A673 (cell line): ENCODE measurements at regions of chr19 and their contacts with region 1.

Region 1: DNA sequence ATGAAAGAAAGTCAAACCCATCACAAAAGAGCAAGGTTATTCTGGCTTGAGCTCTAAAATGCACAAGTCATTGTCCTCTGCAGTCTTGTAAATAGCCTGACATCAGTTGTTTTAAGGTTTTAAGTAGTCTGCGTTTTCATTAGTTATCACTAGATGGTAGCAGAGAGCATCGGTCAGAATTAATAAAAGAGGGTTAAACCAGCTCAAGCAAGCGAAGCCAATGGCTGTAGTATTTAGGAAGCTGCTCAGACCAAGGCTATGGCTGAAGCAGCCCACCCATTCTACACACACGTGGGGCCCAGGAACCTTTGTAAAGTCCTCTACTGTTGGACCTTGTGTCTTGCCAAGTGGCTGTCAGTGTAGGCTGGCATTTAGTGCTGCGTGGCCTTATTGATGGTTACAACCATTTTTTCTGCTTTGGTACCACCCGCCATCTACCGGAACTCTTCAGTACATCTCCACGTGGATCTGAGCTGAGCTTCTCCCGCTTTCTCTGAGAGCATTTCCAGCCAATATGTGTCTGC is 13.3 kb upstream of the ZNF57 start:
- DNase-seq: peak; percentile 82
- H3K4me3 ChIP-seq: no peak overlapping the region
- H3K27ac ChIP-seq: no peak overlapping the region
- H3K4me1 ChIP-seq: peaks cover 6% of the 10 kb centered on the region
- H3K27me3 ChIP-seq: no peaks in the 10 kb centered on the region
- CTCF ChIP-seq: peak; percentile 79

Region 2: DNA sequence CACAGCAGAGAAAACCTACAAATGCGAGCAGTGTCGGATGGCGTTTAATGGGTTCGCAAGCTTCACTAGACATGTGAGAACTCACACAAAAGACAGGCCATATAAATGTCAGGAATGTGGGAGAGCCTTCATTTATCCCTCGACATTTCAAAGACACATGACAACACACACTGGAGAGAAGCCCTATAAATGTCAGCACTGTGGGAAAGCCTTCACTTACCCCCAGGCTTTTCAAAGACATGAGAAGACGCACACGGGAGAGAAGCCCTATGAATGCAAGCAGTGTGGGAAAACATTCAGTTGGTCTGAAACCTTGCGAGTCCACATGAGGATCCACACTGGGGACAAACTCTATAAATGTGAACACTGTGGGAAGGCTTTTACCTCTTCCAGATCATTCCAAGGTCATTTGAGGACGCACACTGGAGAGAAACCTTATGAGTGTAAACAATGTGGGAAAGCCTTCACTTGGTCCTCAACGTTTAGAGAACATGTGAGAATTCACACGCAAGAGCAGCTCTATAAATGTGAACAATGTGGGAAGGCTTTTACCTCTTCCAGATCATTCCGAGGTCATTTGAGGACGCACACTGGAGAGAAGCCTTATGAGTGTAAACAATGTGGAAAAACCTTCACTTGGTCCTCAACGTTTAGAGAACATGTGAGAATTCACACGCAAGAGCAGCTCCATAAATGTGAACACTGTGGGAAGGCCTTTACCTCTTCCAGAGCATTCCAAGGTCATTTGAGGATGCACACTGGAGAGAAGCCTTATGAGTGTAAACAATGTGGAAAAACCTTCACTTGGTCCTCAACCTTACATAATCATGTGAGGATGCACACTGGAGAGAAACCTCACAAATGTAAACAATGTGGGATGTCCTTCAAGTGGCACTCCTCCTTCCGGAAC is 30.1 kb after region 1 on chr19:
- CTCF ChIA-PET with region 1: interaction called, 15 read pairs
- POLR2A ChIA-PET with region 1: no interaction called
- intact Hi-C with region 1: no loop called
- DNase-seq: no peak
- H3K4me3 ChIP-seq: no peak overlapping the region
- H3K27ac ChIP-seq: no peak overlapping the region
- H3K4me1 ChIP-seq: no peaks in the 10 kb centered on the region
- H3K27me3 ChIP-seq: no peaks in the 10 kb centered on the region
- CTCF ChIP-seq: no peak

Region 3: DNA sequence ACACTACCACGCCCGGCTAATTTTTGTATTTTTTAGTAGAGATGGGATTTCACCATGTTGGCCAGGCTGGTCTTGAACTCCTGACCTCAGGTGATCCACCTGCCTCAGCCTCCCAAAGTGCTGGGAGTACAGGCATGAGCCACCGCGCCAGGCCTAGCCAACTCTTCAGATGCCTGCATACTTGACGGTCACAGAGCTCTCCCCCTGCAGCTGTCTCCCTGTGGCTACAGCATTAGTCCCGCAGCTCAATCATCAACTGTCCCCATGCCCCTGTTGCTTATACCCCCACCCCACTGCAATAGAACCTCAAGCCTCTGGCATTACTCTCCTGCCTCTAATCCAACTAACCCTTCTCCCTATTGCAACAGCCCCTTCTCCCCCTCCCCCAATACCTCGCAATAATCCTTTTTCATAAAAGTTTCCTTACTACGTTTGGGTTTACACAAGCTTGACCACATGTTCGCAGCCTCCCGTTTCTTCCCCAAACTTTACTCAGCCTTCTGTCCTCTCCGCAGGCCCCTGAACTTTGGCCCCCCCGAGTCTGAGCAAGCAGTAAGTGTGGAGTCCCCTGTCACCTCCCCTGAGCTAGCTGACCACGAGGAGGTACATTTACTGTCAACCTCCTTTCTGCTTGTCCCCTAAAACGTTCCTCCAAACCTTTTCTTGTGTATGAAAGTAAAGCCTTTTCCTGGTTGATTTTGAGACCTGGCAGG is 55.6 kb after region 1 on chr19:
- CTCF ChIA-PET with region 1: no interaction called
- POLR2A ChIA-PET with region 1: no interaction called
- intact Hi-C with region 1: no loop called
- DNase-seq: no peak
- H3K4me3 ChIP-seq: no peak overlapping the region
- H3K27ac ChIP-seq: no peak overlapping the region
- H3K4me1 ChIP-seq: no peaks in the 10 kb centered on the region
- H3K27me3 ChIP-seq: no peaks in the 10 kb centered on the region
- CTCF ChIP-seq: no peak

Region 4: DNA sequence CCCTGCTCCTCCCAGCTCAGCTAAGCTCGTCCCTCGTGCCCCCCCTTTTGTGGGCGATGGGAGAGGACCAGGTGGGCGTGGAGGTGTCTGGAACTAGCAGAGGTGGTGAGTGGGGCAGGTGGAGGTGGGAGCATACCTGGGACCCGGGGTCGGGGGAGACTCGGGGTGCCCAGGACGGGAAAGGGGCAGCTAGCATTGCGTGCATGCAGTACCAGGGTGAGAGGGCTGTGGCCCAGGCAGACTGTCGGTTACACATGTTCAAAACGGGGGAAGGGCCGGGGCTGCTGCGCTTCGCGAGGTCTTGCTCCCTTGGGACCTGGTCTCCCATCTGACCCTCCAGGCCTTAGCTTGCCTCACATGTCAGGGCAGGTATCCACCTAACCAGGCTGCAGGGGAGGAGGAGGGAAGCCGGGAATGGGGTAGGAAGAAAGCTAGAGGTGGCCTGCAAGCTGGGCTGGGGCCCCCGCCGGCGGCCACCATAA is 165.8 kb after region 1 on chr19:
- CTCF ChIA-PET with region 1: no interaction called
- POLR2A ChIA-PET with region 1: interaction called, 14 read pairs
- intact Hi-C with region 1: no loop called
- DNase-seq: no peak
- H3K4me3 ChIP-seq: no peak overlapping the region
- H3K27ac ChIP-seq: no peak overlapping the region
- H3K4me1 ChIP-seq: peaks cover 12% of the 10 kb centered on the region
- H3K27me3 ChIP-seq: no peaks in the 10 kb centered on the region
- CTCF ChIP-seq: no peak

Region 5: GRCh38 chr19:3163230-3163886 is 275.9 kb after region 1 on chr19:
- CTCF ChIA-PET with region 1: interaction called, 5 read pairs
- POLR2A ChIA-PET with region 1: no interaction called
- intact Hi-C with region 1: loop called (anchors 1 kb)
- DNase-seq: peak; percentile 85
- H3K4me3 ChIP-seq: no peak overlapping the region
- H3K27ac ChIP-seq: no peak overlapping the region
- H3K4me1 ChIP-seq: no peaks in the 10 kb centered on the region
- H3K27me3 ChIP-seq: no peaks in the 10 kb centered on the region
- CTCF ChIP-seq: peak; percentile 94